Pancreas (tissue), 10 donors: ENCODE measurements at regions of chr4 and their contacts with region 1.

Region 1: DNA sequence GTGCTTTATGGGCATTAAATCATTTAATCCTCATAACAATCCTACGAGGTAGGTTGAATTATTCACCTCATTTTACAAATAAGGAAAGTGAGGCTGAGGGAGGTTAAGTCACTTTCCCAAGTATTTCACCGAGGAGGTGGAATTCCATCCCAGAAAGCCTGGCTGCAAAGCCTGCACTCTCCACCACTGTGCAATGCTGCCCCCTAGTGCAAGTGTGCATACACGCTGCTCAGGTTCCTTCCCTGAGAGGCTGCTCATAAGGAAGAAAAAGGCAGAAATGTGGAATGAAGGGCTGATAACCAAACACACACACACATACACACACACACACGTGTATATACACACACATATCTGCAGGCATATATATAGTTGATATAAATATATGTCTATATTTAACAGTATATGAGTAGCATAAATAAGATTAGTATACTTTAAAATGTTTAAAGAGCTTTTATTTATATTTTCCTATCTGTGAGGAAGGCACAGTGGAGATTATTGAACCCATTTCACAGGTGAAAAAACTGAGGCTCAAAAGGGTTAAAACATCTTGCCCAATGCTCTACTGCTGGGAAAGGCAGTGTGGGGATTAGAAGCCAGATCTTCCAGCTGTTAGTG is 714.5 kb upstream of the TENM3 start:
- DNase-seq: peak; percentile 50 to 82 (median 62)
- ATAC-seq: peak; percentile 81 to 95 (median 94)
- H3K4me3 ChIP-seq: no peak overlapping the region
- H3K27ac ChIP-seq: no peak overlapping the region
- H3K4me1 ChIP-seq: no peaks in the 10 kb centered on the region
- H3K27me3 ChIP-seq: peaks cover 0 to 13% (median 2%) of the 10 kb centered on the region in 4 donors
- CTCF ChIP-seq: peak; percentile 47 to 76 (median 66)

Region 2: DNA sequence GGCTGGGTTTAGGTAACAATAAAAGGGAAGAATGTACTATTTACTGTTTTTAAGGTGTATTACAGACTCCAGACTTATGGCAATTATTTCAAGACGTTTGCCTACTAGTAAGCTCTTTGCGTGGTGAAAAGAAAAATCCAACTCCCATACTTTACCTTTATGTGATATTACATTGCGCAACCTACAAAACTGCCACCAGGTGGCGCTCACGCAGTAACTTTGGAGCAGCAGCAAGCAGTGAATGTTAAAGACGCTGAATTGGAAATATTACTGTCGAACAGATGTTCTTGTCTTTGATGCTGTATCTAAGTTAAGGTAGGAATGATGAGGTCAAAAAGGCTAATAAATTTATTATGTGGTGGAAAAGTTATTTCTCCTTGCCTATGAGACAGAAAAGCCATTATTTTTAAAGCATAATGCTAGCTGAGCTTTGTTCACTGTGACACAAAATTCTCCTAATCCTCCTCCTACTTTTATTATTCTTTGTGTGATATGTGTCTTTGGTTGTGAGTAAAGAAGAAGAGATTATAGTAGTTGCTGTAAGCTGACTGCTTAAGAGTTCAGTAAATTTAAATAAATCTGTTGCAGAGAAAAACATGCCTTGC is 385.3 kb before region 1 on chr4:
- intact Hi-C with region 1: loop called in 2 of 3 experiments (anchors 5 to 10 kb)
- DNase-seq: peak; percentile 37 to 89 (median 76)
- ATAC-seq: peak; percentile 63 to 85 (median 82)
- H3K4me3 ChIP-seq: no peak overlapping the region
- H3K27ac ChIP-seq: no peak overlapping the region
- H3K4me1 ChIP-seq: no peaks in the 10 kb centered on the region
- H3K27me3 ChIP-seq: no peaks in the 10 kb centered on the region
- CTCF ChIP-seq: peak; percentile 76 to 92 (median 87)

Region 3: DNA sequence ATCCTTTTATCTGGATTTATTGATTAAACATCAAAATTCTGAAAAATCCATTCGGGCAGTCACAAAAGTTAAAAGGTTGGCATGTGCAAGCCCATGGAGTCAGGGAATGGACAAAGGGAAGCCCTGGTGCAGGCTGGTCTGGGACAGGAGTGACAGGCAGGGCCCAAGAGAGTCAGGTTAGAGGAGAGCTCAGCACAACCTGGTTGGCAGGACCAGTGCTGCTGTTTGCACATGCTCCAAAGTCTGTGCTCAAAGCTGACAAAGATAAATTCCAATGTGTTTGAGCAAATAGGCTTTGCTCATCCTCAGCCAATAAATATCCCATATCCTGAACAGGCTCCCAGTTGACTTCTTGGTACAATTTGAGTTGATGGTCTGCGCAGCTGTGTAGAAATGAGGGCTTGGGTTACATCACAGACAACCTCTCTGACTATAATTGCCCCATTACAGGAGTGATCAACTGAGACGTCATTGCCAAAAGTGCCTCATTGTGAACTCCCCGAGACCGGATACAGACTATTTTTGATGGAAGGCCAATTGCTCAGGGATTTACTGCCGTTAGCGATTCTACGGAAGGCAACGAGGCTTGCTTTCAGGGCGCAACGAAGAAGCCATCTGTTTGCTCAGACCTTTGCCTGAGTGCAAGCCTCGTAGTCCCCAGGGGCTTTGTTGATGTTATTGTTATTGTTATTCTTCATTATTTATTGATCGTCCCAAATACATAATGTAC is 293.6 kb before region 1 on chr4:
- intact Hi-C with region 1: no loop called
- DNase-seq: no peak
- ATAC-seq: no peak
- H3K4me3 ChIP-seq: no peak overlapping the region
- H3K27ac ChIP-seq: no peak overlapping the region
- H3K4me1 ChIP-seq: no peaks in the 10 kb centered on the region
- H3K27me3 ChIP-seq: no peaks in the 10 kb centered on the region
- CTCF ChIP-seq: no peak